Posterior cingulate gyrus (tissue), 11 donors: ENCODE measurements at regions of chr17 and their contacts with region 1.

Region 1: GRCh38 chr17:76278952-76279741 is 14.0 kb downstream of the UBALD2 start:
- DNase-seq: peak; percentile 73 to 98 (median 90)

Region 2: GRCh38 chr17:76014184-76014924 is 264.8 kb before region 1 on chr17:
- intact Hi-C with region 1: loop called (anchors 10 kb)
- DNase-seq: peak in 8 of 10 donors; percentile 51 to 94 (median 62)

Region 3: GRCh38 chr17:76121932-76122430 is 157.2 kb before region 1 on chr17:
- intact Hi-C with region 1: loop called (anchors 1 kb)
- DNase-seq: peak in 3 of 10 donors; percentile 34 to 84 (median 73)

Region 4: GRCh38 chr17:76182016-76182764 is 97.0 kb before region 1 on chr17:
- intact Hi-C with region 1: loop called (anchors 5 kb)
- DNase-seq: peak; percentile 69 to 98 (median 86)

Region 5: GRCh38 chr17:76239538-76240274 is 39.4 kb before region 1 on chr17:
- intact Hi-C with region 1: loop called (anchors 5 kb)
- DNase-seq: peak in 1 of 10 donors; percentile 79